ENCODE measurements at regions of chr9 and their contacts with region 1.

Region 1: GRCh38 chr9:104863180-104863883 is 64.6 kb downstream of the ABCA1 start:
- DNase-seq: peak; percentile 68 to 75
- ATAC-seq: peak; percentile 84 to 94
- H3K4me3 ChIP-seq: no peak overlapping the region
- H3K27ac ChIP-seq: peak overlapping the region; percentile 28 to 53; a peak in 5 of 6 replicates
- H3K4me1 ChIP-seq: peaks cover 27% of the 10 kb centered on the region
- CTCF ChIP-seq: peak; percentile 80
- EP300 ChIP-seq: no peak
- POLR2A ChIP-seq: no peak
- RAD21 ChIP-seq: peak; percentile 84 to 89

Region 2: DNA sequence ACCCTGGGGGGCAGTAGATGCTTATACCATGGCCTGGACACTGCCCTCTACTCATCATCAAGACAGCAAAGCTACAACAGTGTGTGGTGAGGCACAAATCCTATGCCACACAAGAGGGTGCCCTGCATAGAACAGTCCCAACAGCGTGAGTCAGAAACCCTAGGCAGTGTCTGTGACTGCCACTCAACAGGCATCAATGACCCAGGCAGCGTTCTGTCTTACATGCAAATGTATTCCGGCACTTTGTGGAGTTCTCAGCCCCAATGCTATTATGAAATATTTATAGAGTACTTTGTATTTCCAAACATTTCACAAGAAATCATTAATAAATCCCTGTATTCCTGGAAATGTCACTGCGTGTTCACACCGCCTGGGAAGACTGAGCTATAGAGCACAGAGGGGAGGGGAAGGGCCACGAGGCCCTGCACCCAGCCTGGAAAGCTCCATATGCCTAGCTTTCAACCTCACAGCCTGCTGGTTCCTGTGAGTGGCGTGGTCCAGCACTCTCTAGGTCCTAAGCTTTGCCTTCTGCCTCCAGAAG is 21.7 kb before region 1 on chr9:
- CTCF ChIA-PET with region 1: interaction called, 18 read pairs
- POLR2A ChIA-PET with region 1: no interaction called
- DNase-seq: no peak
- ATAC-seq: peak in 1 of 2 experiments; percentile 29; a peak in 2 of 6 replicates
- H3K4me3 ChIP-seq: no peak overlapping the region
- H3K27ac ChIP-seq: no peak overlapping the region
- H3K4me1 ChIP-seq: no peaks in the 10 kb centered on the region
- CTCF ChIP-seq: no peak
- EP300 ChIP-seq: no peak
- POLR2A ChIP-seq: no peak
- RAD21 ChIP-seq: no peak

Region 3: GRCh38 chr9:104885818-104886709 is 22.7 kb after region 1 on chr9:
- CTCF ChIA-PET with region 1: interaction called, 13 read pairs
- POLR2A ChIA-PET with region 1: no interaction called
- DNase-seq: no peak
- ATAC-seq: no peak
- H3K4me3 ChIP-seq: no peak overlapping the region
- H3K27ac ChIP-seq: no peak overlapping the region
- H3K4me1 ChIP-seq: no peaks in the 10 kb centered on the region
- CTCF ChIP-seq: no peak
- EP300 ChIP-seq: no peak
- POLR2A ChIP-seq: no peak
- RAD21 ChIP-seq: no peak

Region 4: DNA sequence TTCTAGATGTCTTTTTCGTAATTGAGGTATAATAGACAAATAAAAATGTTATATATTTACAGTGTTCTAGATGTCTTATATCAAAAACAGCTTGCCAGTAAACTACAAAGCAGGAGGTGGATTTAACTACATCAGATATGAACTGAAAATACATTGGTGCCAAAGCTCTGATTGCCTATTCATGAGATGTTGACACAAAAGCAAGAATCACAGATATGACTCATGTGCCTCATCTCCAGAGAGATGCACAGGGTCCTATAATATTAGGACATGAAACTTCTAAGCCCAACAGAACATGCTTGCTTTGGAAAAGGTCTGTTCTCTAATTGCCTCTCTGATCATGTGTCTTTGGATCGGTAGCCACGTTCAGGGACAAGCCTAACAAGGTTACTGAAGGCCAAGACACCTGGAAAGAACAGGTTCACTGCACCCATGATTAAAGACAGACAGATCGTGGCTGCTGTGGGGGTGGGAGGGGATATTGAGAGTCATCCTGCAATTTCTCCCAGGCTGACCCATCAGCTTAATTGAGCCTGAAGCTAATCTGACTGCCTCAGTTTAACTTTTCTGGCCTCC is 47.8 kb after region 1 on chr9:
- CTCF ChIA-PET with region 1: interaction called, 11 read pairs
- POLR2A ChIA-PET with region 1: no interaction called
- DNase-seq: no peak
- ATAC-seq: peak in 1 of 2 experiments; percentile 38; a peak in 1 of 6 replicates
- H3K4me3 ChIP-seq: no peak overlapping the region
- H3K27ac ChIP-seq: peak overlapping the region in 1 of 2 experiments; percentile 37; a peak in 1 of 6 replicates
- H3K4me1 ChIP-seq: peaks cover 54% of the 10 kb centered on the region
- CTCF ChIP-seq: no peak
- EP300 ChIP-seq: no peak
- POLR2A ChIP-seq: no peak
- RAD21 ChIP-seq: no peak

Region 5: DNA sequence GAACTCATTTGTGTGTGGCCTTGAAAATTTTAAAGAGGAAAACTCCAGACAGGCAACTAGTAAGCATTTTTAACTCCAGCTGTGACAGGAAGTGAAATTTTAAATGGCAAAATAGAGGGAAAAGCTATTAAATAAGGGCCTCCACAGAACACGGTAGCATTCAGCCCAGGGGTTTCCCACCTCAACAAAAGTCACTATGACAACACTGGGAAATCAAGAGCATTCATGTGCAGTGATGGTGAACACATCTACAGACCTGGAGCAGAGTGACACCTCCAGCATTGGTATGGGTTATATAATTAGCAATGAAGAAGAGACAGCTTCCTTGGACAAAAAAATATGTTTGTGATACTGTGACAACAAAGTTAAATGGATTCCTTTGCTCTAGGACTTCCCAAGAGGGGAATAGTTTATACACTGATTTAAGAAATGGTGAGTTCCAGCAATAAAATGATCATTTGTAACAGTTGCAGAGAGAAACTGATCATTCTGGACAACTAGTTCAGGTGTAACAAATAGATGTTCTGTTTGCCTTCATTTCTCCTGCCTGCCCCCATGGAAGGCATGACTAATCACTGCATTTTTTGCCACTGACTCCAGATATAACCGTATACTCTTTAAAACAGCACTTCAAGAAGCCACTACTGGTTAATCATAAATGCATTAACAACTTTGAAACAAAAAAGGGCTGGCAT is 287.8 kb after region 1 on chr9:
- CTCF ChIA-PET with region 1: interaction called, 39 read pairs
- POLR2A ChIA-PET with region 1: no interaction called
- DNase-seq: peak in 1 of 2 experiments; percentile 23
- ATAC-seq: peak; percentile 41 to 57; a peak in 3 of 6 replicates
- H3K4me3 ChIP-seq: no peak overlapping the region
- H3K27ac ChIP-seq: peak overlapping the region; percentile 47 to 69
- H3K4me1 ChIP-seq: peaks cover 38% of the 10 kb centered on the region
- CTCF ChIP-seq: no peak
- EP300 ChIP-seq: no peak
- POLR2A ChIP-seq: no peak
- RAD21 ChIP-seq: 0 out of 5 replicates have a peak, but pooled peaks of 1 of the 2 experiments have one; percentile 10